WTC11 (cell line): ENCODE measurements at regions of chr16 and their contacts with region 1.

Region 1: DNA sequence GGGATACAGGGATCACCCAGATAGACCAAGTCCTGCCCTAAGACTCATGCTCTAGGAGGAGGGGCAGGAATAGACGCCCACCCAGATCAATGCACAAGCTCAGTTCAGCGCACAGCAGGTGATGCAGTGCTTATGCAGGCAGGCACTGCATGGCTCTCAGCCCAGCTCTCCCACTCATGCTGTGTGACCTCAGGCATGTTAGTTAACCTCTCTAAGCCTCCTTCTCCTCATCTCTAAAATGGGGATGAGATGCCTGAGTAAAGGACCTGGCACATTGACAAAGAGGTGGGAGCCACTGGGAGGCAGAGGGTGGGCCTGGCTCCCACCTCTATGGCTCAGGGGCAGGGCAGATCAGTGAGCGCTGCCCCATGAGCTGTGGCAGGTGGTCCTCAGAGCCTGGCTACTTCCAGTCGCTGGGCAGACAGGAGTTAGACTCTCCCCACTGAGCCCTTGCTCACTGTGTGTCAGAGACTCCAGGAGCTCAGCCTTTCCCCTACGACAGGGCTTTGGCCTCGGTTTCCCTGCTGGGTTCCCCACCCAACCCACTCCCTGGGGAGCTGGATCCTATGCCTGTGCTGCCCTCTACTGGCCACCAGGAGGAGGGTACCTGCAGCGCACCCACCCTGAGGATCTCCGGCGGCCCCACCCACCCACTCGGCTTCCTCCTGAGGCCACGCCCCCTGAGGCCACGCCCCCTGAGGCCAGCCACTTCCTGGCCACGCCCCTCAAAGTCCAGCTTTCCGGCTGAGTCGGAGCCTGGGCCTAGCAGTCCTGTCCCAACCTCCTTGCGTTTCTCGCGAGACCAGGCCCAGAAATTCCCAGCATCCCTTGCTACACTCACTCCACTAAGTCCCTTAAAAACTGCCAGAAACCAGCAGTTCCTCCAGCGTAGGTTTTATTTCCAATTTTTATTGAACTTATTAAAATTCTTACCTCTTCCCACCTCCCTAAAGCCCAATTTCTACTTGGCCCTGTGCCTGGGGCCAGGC is 196.1 kb downstream of the GSG1L start:
- DNase-seq: peak; percentile 96
- ATAC-seq: peak; percentile 96
- H3K4me3 Mint-ChIP-seq: no peak overlapping the region
- H3K27ac Mint-ChIP-seq: no peak overlapping the region
- H3K4me1 Mint-ChIP-seq: no peaks in the 10 kb centered on the region
- H3K27me3 Mint-ChIP-seq: peaks cover 4% of the 10 kb centered on the region
- CTCF ChIP-seq: peak; percentile 85

Region 2: GRCh38 chr16:27549859-27550581 is 317.4 kb before region 1 on chr16 and contains the starts of genes GTF3C1 and KATNIP:
- CTCF ChIA-PET with region 1: interaction called, 10 read pairs
- POLR2A ChIA-PET with region 1: no interaction called
- DNase-seq: peak; percentile 100
- ATAC-seq: peak; percentile 97
- H3K4me3 Mint-ChIP-seq: peak within 1 kb of the TSS; percentile 100
- H3K27ac Mint-ChIP-seq: peak within 1 kb of the TSS; percentile 96
- H3K4me1 Mint-ChIP-seq: peaks cover 18% of the 10 kb centered on the region
- H3K27me3 Mint-ChIP-seq: peaks cover 2% of the 10 kb centered on the region; the same call in 1 of the 2 replicates
- CTCF ChIP-seq: no peak
- total RNA-seq, gene GTF3C1: 116 to 146 TPM (median 118 TPM) in 3 replicates
- total RNA-seq, gene KATNIP: 17.2 to 23.0 TPM (median 17.5 TPM) in 3 replicates

Region 3: GRCh38 chr16:27690608-27691007 is 176.8 kb before region 1 on chr16:
- CTCF ChIA-PET with region 1: interaction called, 29 read pairs
- POLR2A ChIA-PET with region 1: no interaction called
- DNase-seq: peak; percentile 71
- ATAC-seq: peak; percentile 77
- H3K4me3 Mint-ChIP-seq: no peak overlapping the region
- H3K27ac Mint-ChIP-seq: no peak overlapping the region
- H3K4me1 Mint-ChIP-seq: peaks cover 5% of the 10 kb centered on the region
- H3K27me3 Mint-ChIP-seq: no peaks in the 10 kb centered on the region
- CTCF ChIP-seq: peak; percentile 75; the same call in 1 of the 2 replicates

Region 4: GRCh38 chr16:27706866-27707685 is 160.3 kb before region 1 on chr16:
- CTCF ChIA-PET with region 1: interaction called, 10 read pairs
- POLR2A ChIA-PET with region 1: no interaction called
- DNase-seq: no peak
- ATAC-seq: no peak
- H3K4me3 Mint-ChIP-seq: no peak overlapping the region
- H3K27ac Mint-ChIP-seq: no peak overlapping the region
- H3K4me1 Mint-ChIP-seq: peaks cover 14% of the 10 kb centered on the region
- H3K27me3 Mint-ChIP-seq: no peaks in the 10 kb centered on the region
- CTCF ChIP-seq: no peak

Region 5: GRCh38 chr16:27737513-27737912 is 129.9 kb before region 1 on chr16:
- CTCF ChIA-PET with region 1: no interaction called
- POLR2A ChIA-PET with region 1: no interaction called
- DNase-seq: no peak
- ATAC-seq: no peak
- H3K4me3 Mint-ChIP-seq: no peak overlapping the region
- H3K27ac Mint-ChIP-seq: no peak overlapping the region
- H3K4me1 Mint-ChIP-seq: no peaks in the 10 kb centered on the region
- H3K27me3 Mint-ChIP-seq: no peaks in the 10 kb centered on the region
- CTCF ChIP-seq: no peak

Region 6: DNA sequence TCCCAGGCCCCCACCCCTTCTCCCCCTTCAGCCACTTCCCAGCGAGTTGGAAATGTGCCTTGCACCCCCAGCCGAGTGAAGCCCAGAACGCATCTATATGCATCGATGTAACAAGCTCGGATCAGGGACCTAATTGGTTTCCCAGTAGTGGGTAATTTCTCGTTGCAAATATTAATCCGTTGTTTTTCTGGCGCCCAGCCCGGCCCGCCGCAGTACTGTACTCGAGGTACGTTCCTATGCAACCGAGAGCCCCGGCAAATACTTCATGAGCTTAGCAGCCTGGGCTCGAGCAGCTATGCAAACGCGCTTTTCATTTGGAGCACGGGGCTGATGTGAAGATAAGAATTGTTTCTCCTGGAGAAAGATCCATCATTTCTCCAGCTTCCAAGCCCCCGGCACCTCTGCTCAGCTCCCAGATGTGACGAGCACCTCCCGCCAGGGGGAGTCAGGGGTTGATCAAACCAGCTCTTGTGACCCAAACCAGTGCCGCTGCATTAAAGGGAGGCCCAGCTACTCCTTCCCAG is 87.7 kb before region 1 on chr16:
- CTCF ChIA-PET with region 1: interaction called, 100 read pairs
- POLR2A ChIA-PET with region 1: no interaction called
- DNase-seq: peak; percentile 82
- ATAC-seq: peak; percentile 90
- H3K4me3 Mint-ChIP-seq: no peak overlapping the region
- H3K27ac Mint-ChIP-seq: no peak overlapping the region
- H3K4me1 Mint-ChIP-seq: 0 out of 2 replicates have a peak, but pooled peaks cover 2% of the 10 kb centered on the region
- H3K27me3 Mint-ChIP-seq: no peaks in the 10 kb centered on the region
- CTCF ChIP-seq: peak; percentile 31; the same call in 1 of the 2 replicates

Region 7: GRCh38 chr16:27847030-27847550 is 20.3 kb before region 1 on chr16:
- CTCF ChIA-PET with region 1: interaction called, 10 read pairs
- POLR2A ChIA-PET with region 1: no interaction called
- DNase-seq: no peak
- ATAC-seq: no peak
- H3K4me3 Mint-ChIP-seq: no peak overlapping the region
- H3K27ac Mint-ChIP-seq: 0 out of 2 replicates have a peak overlapping the region, but pooled peaks have one; percentile 67
- H3K4me1 Mint-ChIP-seq: peaks cover 36% of the 10 kb centered on the region
- H3K27me3 Mint-ChIP-seq: no peaks in the 10 kb centered on the region
- CTCF ChIP-seq: no peak

Region 8: GRCh38 chr16:27892881-27893280 is 25.5 kb after region 1 on chr16:
- CTCF ChIA-PET with region 1: interaction called, 24 read pairs
- POLR2A ChIA-PET with region 1: no interaction called
- DNase-seq: peak; percentile 44
- ATAC-seq: peak; percentile 89
- H3K4me3 Mint-ChIP-seq: no peak overlapping the region
- H3K27ac Mint-ChIP-seq: no peak overlapping the region
- H3K4me1 Mint-ChIP-seq: peaks cover 6% of the 10 kb centered on the region; the same call in 1 of the 2 replicates
- H3K27me3 Mint-ChIP-seq: peaks cover 4% of the 10 kb centered on the region; the same call in 1 of the 2 replicates
- CTCF ChIP-seq: 0 out of 2 replicates have a peak, but pooled peaks have one; percentile 22